ENCODE measurements at regions of chr9 and their contacts with region 1.

Region 1: GRCh38 chr9:37784616-37785483 is at the start of gene EXOSC3:
- DNase-seq: peak; percentile 88 to 92
- ATAC-seq: peak; percentile 94 to 98 (median 98)
- H3K4me3 ChIP-seq: peak within 1 kb of the TSS; percentile 57 to 99 (median 89)
- H3K27ac ChIP-seq: peak within 1 kb of the TSS in 9 of 10 donors; percentile 72 to 89 (median 79)
- H3K4me1 ChIP-seq: peaks cover 0 to 28% (median 25%) of the 10 kb centered on the region in 9 donors
- H3K27me3 ChIP-seq: peaks cover 0 to 14% (median 6%) of the 10 kb centered on the region in 7 donors
- CTCF ChIP-seq: peak in 3 of 9 donors; percentile 22 to 34 (median 23)
- total RNA-seq, gene EXOSC3: 7.5 to 15.2 (median 12.8) TPM

Region 2: DNA sequence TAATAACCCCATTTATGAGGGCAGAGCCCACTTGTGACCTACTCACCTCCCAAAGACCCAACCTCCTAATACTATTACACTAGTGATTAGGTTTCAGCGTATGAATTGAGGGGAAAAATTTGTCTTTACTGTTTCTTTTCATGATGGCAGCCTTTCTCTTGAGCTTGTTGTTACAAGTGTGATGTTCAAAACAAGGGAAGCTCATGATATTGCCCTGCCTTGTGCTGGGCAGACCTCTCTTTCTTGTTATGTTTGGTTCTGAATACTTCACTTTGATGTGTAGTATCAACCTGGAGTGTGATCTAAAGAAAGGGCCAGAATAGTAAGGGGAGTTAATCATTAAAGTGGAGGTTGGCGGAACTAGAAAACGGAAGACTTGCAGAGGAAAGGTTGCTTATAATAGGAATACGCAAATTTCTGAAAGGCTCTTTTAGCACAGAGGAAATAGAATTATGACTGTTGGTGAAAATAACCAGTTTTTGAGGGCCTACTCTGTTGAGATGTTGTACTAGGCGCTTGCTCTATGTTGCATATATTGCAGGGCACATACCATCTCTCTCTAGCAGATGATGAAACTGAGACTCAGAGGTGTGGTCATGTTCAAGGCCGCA is 1144.0 kb before region 1 on chr9:
- intact Hi-C with region 1: no loop called
- DNase-seq: no peak
- ATAC-seq: no peak
- H3K4me3 ChIP-seq: no peak overlapping the region
- H3K27ac ChIP-seq: no peak overlapping the region
- H3K4me1 ChIP-seq: no peaks in the 10 kb centered on the region
- H3K27me3 ChIP-seq: no peaks in the 10 kb centered on the region
- CTCF ChIP-seq: no peak

Region 3: GRCh38 chr9:37800631-37801286 is 15.9 kb after region 1 on chr9 and contains the start of gene DCAF10:
- intact Hi-C with region 1: loop called in 3 of 10 experiments (anchors 1 to 2 kb)
- DNase-seq: peak; percentile 87 to 88
- ATAC-seq: peak; percentile 95 to 97 (median 97)
- H3K4me3 ChIP-seq: peak within 1 kb of the TSS; percentile 78 to 99 (median 96)
- H3K27ac ChIP-seq: peak within 1 kb of the TSS; percentile 18 to 94 (median 88)
- H3K4me1 ChIP-seq: peaks cover 8 to 39% (median 35%) of the 10 kb centered on the region in 9 donors
- H3K27me3 ChIP-seq: no peaks in the 10 kb centered on the region
- CTCF ChIP-seq: no peak
- total RNA-seq, gene DCAF10: 16.1 to 23.4 (median 19.6) TPM

Measured in heart right ventricle (tissue), 16 donors.